T-cell (primary cell): ENCODE measurements at regions of chr7 and their contacts with region 1.

Region 1: GRCh38 chr7:26686448-26686981 is 177.9 kb downstream of the SKAP2 start:
- DNase-seq: peak in 2 of 35 experiments; percentile 4 to 63
- ATAC-seq: peak in 2 of 4 experiments; percentile 40 to 48
- H3K4me3 ChIP-seq: no peak overlapping the region
- H3K4me3 Mint-ChIP-seq: no peak overlapping the region
- H3K27ac ChIP-seq: no peak overlapping the region
- H3K27ac Mint-ChIP-seq: no peak overlapping the region
- H3K4me1 ChIP-seq: no peaks in the 10 kb centered on the region
- H3K4me1 Mint-ChIP-seq: peaks cover 0 to 3% (median 0%) of the 10 kb centered on the region in 3 donors
- H3K27me3 ChIP-seq: no peaks in the 10 kb centered on the region
- H3K27me3 Mint-ChIP-seq: peaks cover 11 to 28% of the 10 kb centered on the region in 2 donors

Region 2: GRCh38 chr7:26667500-26668133 is 18.9 kb before region 1 on chr7:
- CTCF ChIA-PET with region 1: interaction called, 7 to 16 read pairs
- POLR2A ChIA-PET with region 1: interaction called in 1 of 2 experiments, 3 read pairs
- DNase-seq: peak in 33 of 35 experiments; percentile 3 to 79 (median 33)
- ATAC-seq: peak in 3 of 4 experiments; percentile 40 to 59 (median 58)
- H3K4me3 ChIP-seq: no peak overlapping the region
- H3K4me3 Mint-ChIP-seq: no peak overlapping the region
- H3K27ac ChIP-seq: no peak overlapping the region
- H3K27ac Mint-ChIP-seq: no peak overlapping the region
- H3K4me1 ChIP-seq: peaks cover 0 to 3% of the 10 kb centered on the region in 2 experiments
- H3K4me1 Mint-ChIP-seq: peaks cover 17 to 24% (median 20%) of the 10 kb centered on the region in 3 donors
- H3K27me3 ChIP-seq: no peaks in the 10 kb centered on the region
- H3K27me3 Mint-ChIP-seq: peaks cover 12 to 15% of the 10 kb centered on the region in 2 donors

Region 3: DNA sequence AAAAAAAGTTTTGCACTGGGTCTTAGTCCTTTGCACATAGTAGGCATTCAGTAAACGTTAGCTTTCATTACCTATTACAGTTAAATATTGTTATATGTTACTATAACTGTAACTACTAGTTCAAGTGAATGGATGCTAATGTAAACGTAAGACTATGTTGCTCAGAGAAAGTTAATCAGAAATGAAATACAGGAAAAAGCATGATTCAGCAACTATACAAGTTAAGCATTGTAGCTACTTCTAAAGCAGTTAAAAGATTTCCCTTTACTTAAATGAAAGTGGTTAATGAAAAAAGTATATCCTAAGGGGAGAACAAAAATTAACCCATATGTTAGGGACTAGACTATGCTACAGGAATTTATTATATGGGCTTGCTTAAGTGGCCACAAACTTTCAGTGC is 56.7 kb after region 1 on chr7:
- CTCF ChIA-PET with region 1: no interaction called
- POLR2A ChIA-PET with region 1: no interaction called
- DNase-seq: no peak
- ATAC-seq: no peak
- H3K4me3 ChIP-seq: no peak overlapping the region
- H3K4me3 Mint-ChIP-seq: no peak overlapping the region
- H3K27ac ChIP-seq: no peak overlapping the region
- H3K27ac Mint-ChIP-seq: no peak overlapping the region
- H3K4me1 ChIP-seq: no peaks in the 10 kb centered on the region
- H3K4me1 Mint-ChIP-seq: no peaks in the 10 kb centered on the region
- H3K27me3 ChIP-seq: no peaks in the 10 kb centered on the region
- H3K27me3 Mint-ChIP-seq: peaks cover 4 to 5% of the 10 kb centered on the region in 2 donors

Region 4: DNA sequence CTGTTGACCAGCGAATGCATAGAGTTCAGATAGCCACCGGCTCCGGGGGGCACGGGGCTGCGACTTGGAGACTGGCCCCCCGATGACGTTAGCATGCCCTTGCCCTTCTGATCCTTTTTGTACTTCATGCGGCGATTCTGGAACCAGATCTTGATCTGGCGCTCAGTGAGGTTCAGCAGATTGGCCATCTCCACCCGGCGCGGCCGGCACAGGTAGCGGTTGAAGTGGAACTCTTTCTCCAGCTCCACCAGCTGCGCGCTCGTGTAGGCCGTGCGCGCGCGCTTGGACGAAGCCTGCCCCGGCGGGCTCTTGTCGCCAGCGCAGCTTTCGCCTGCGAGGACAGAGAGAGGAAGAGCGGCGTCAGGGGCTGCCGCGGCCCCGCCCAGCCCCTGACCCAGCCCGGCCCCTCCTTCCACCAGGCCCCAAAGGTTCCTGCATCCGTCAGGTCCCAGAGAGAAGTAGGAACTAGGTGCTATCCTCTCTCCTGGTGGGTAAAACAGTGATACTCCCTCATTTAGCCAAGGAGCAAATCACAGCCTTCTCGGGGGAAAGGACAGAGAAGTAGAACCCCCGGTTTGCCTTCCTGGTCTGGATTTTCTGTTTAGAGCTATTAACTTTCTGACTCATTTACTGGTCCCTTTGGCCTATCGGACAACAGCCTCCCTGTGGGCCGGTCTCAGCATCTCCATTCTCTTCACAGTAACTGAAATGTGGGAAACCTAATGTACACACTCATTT is 422.0 kb after region 1 on chr7:
- CTCF ChIA-PET with region 1: interaction called in 1 of 2 experiments, 14 read pairs
- POLR2A ChIA-PET with region 1: no interaction called
- DNase-seq: no peak
- ATAC-seq: no peak
- H3K4me3 ChIP-seq: no peak overlapping the region
- H3K4me3 Mint-ChIP-seq: no peak overlapping the region
- H3K27ac ChIP-seq: no peak overlapping the region
- H3K27ac Mint-ChIP-seq: no peak overlapping the region
- H3K4me1 ChIP-seq: no peaks in the 10 kb centered on the region
- H3K4me1 Mint-ChIP-seq: peaks cover 4 to 5% (median 5%) of the 10 kb centered on the region in 3 donors
- H3K27me3 ChIP-seq: peaks cover 5 to 30% of the 10 kb centered on the region in 2 experiments
- H3K27me3 Mint-ChIP-seq: peaks cover 17 to 29% of the 10 kb centered on the region in 2 donors

Region 5: DNA sequence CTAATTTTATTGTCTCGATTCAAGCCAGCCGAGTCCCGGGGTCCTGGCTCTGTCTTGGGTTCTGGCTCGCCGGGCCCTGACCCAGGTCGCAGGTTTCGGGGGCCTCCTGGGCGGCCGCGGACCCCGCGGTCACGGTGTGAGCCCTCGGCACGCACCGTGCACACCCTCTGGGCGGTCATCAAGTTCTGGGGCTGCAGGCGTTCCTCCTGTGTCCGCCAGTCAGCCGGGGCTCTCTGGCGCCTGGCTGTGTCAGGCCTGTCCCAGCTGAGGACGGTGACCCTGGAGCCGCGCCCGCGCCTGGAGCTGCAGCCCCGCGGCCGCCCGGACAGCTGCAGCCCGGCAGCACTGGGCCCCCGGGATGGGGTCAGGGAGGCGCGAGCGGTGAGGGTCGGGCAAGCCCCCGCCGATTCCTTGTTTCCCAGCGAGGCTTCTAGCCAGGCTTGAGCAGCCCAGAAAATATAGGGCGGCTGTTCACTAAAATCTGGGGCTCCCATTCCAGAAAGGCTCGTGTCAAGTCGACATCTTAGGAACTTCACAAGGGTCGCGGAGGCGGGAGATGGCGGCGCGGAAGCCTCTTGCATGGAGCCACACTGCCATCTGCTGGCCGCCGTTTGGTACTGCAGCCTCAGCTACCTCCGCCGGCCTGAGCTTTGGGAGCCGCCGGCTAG is 474.2 kb after region 1 on chr7:
- CTCF ChIA-PET with region 1: interaction called, 13 to 59 read pairs
- POLR2A ChIA-PET with region 1: interaction called in 1 of 2 experiments, 3 read pairs
- DNase-seq: peak; percentile 50 to 92 (median 79)
- ATAC-seq: peak; percentile 70 to 85 (median 74)
- H3K4me3 ChIP-seq: peak overlapping the region; percentile 57 to 81
- H3K4me3 Mint-ChIP-seq: peak overlapping the region; percentile 43 to 73 (median 63)
- H3K27ac ChIP-seq: no peak overlapping the region
- H3K27ac Mint-ChIP-seq: no peak overlapping the region
- H3K4me1 ChIP-seq: peaks cover 2 to 61% of the 10 kb centered on the region in 2 experiments
- H3K4me1 Mint-ChIP-seq: peaks cover 35 to 41% (median 40%) of the 10 kb centered on the region in 3 donors
- H3K27me3 ChIP-seq: peaks cover 2 to 90% of the 10 kb centered on the region in 2 experiments
- H3K27me3 Mint-ChIP-seq: peaks cover 49 to 82% of the 10 kb centered on the region in 2 donors